Activated T-helper 1 cell treated with anti-CD3 and anti-CD28 coated beads, Interleukin-12 subunit alpha, Interleukin-12 subunit beta, Interleukin-2, Interleukin-4 antibody, amounts not matched to agents 30 ng/mL and 10 ng/mL and 1 ng/mL, durations not matched to agents 14 hours and 24 hours and 36 hours (primary cell): ENCODE measurements at regions of chr6 and their contacts with region 1.

Region 1: GRCh38 chr6:31665501-31666336 is at the start of gene CSNK2B:
- DNase-seq: peak; percentile 98
- H3K4me3 Mint-ChIP-seq: peak within 1 kb of the TSS; percentile 98
- H3K27ac Mint-ChIP-seq: peak within 1 kb of the TSS; percentile 90
- H3K4me1 Mint-ChIP-seq: peaks cover 74% of the 10 kb centered on the region
- H3K27me3 Mint-ChIP-seq: no peaks in the 10 kb centered on the region
- total RNA-seq, gene CSNK2B: 302 and 308 TPM in 2 replicates

Region 2: GRCh38 chr6:31541658-31542521 is 123.8 kb before region 1 on chr6 and contains the start of gene DDX39B:
- intact Hi-C with region 1: loop called (anchors 1 kb)
- DNase-seq: peak; percentile 92
- H3K4me3 Mint-ChIP-seq: peak within 1 kb of the TSS; percentile 100
- H3K27ac Mint-ChIP-seq: peak within 1 kb of the TSS; percentile 97
- H3K4me1 Mint-ChIP-seq: peaks cover 41% of the 10 kb centered on the region
- H3K27me3 Mint-ChIP-seq: peaks cover 3% of the 10 kb centered on the region
- total RNA-seq, gene DDX39B: 628 and 637 TPM in 2 replicates

Region 3: DNA sequence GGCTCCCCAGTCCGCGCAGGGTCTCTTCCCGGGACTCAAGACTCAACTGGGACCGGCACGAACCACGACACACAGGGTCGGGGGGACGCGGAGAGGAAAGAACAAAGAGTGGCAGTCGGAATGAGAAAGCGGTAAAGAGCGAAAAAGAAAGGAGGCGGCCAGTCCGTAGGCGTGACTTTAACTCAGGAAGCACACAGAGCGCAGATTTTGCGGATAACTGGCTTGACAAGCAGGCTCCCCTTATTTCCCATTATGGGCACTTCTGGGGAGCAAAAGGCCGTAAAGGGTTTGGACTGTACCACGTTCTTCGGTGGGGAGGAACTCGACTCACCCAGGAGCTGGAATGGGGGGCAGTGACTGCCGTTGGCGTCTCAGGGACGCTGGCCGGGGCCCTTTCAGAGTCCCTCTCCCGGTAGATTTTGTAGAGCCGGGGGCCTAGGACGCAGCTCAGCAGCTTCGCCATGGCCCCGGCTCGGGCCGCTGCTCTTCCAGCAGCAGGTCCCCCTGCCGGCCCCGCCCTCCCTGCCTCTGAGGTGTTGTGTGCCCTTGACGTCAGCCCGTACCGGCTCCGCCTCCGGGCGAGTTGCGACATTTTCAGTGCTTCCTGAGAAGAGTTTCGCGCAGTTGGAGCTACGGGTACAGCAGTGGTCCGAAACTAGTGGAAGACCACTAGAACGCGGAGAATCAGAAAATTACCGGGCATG is 37.3 kb after region 1 on chr6 and contains the start of gene ABHD16A:
- intact Hi-C with region 1: loop called (anchors 1 kb)
- DNase-seq: peak; percentile 95
- H3K4me3 Mint-ChIP-seq: peak within 1 kb of the TSS; percentile 98
- H3K27ac Mint-ChIP-seq: peak within 1 kb of the TSS; percentile 97
- H3K4me1 Mint-ChIP-seq: peaks cover 26% of the 10 kb centered on the region
- H3K27me3 Mint-ChIP-seq: no peaks in the 10 kb centered on the region
- total RNA-seq, gene ABHD16A: 45.7 and 46.5 TPM in 2 replicates

Region 4: DNA sequence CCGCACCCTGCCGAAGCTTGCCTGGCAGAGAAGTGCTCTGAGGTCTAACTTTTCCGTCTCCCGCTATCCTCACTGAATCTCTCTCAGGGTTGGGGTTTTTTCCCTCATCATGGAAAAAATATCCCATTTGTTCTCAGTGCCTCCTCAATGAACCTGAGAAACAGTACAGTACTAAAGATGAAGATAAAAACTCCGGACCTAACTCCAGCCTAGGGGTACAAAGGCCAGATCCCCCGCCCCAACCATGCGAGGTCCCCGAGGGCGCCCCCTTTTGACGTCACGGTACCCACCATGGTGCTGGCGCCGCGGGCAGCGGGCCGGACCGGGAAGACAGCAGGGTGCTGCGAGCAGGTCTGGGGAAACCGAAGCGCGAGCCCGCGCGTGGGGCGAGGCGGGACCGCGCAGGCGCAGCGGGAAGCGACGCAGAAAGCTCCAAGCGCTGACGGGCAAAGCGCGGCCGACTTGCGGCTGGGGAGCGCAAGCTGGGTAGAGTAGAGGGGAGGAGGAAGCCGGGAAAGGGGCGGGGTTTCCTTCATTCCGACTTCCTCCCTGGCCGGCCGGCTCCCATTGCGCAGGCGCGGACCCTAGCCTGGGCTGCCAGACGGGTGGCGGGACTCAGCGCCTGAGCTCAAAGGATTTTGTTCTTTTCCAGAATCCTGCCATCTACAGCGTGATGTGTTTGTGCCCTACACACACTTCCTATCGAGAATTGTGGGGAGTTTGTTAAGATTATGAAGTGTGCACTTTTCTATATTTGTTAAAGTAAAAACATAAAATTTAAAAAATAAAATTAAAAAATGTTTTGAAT is 140.9 kb after region 1 on chr6 and contains the start of gene LSM2:
- intact Hi-C with region 1: loop called (anchors 1 kb)
- DNase-seq: peak; percentile 97
- H3K4me3 Mint-ChIP-seq: peak within 1 kb of the TSS; percentile 94
- H3K27ac Mint-ChIP-seq: peak within 1 kb of the TSS; percentile 90
- H3K4me1 Mint-ChIP-seq: peaks cover 20% of the 10 kb centered on the region
- H3K27me3 Mint-ChIP-seq: no peaks in the 10 kb centered on the region
- total RNA-seq, gene LSM2: 136 and 137 TPM in 2 replicates

Region 5: GRCh38 chr6:31862344-31863227 is 196.9 kb after region 1 on chr6 and contains the start of gene NEU1:
- intact Hi-C with region 1: loop called (anchors 1 kb)
- DNase-seq: peak; percentile 99
- H3K4me3 Mint-ChIP-seq: peak within 1 kb of the TSS; percentile 97
- H3K27ac Mint-ChIP-seq: peak within 1 kb of the TSS; percentile 94
- H3K4me1 Mint-ChIP-seq: peaks cover 37% of the 10 kb centered on the region
- H3K27me3 Mint-ChIP-seq: peaks cover 3% of the 10 kb centered on the region
- total RNA-seq, gene NEU1: 22.1 and 24.3 TPM in 2 replicates

Region 6: GRCh38 chr6:32177788-32178546 is 512.2 kb after region 1 on chr6 and contains the start of gene RNF5:
- intact Hi-C with region 1: loop called (anchors 2 kb)
- DNase-seq: peak; percentile 91
- H3K4me3 Mint-ChIP-seq: peak within 1 kb of the TSS; percentile 95
- H3K27ac Mint-ChIP-seq: peak within 1 kb of the TSS; percentile 94
- H3K4me1 Mint-ChIP-seq: peaks cover 60% of the 10 kb centered on the region
- H3K27me3 Mint-ChIP-seq: no peaks in the 10 kb centered on the region
- total RNA-seq, gene RNF5: 58.1 and 60.4 TPM in 2 replicates